ENCODE measurements at regions of chr3 and their contacts with region 1.

Region 1: DNA sequence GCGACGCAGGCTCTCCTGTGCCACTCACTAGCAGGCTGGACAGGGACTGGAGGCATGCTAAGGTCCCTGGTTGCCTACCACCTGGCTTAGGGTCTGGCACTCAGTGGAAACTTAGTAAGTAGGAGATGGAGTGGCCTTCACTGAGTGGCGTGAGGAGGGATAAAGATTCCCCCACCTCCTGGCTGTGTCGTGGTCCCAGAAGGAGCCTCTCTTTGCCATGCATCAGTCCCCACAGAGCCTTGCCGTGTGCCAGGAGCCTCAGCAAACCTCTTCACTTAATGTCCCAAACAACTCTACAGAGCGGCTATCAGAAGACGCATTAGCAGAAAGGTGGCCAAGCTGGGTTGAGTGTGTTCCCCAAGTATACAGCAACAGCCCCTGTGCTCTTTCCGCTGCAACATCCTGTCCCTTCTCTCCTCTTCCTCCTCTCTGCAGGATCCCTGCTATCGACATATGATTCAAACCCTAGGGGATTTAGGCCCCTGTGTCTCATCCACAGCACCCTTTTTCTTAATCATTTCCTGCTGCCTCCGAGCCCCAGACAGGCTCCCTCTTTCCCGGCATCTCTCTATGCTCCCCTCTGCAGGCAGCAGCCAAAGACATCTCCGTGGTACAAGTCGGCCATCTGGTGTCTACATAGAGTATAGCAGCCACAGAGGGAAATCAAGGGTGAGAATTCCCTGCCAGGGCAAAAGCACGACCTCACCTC is 66.7 kb downstream of the SLC6A1 start:
- DNase-seq: peak in 1 of 2 donors; percentile 79
- H3K4me3 ChIP-seq: no peak overlapping the region
- H3K27ac ChIP-seq: no peak overlapping the region
- H3K4me1 ChIP-seq: peaks cover 0 to 20% (median 7%) of the 10 kb centered on the region in 4 donors
- H3K27me3 ChIP-seq: peaks cover 0 to 62% (median 21%) of the 10 kb centered on the region in 3 donors
- CTCF ChIP-seq: peak in 5 of 7 experiments; percentile 34 to 59 (median 53)
- EP300 ChIP-seq: no peak
- POLR2A ChIP-seq: no peak

Region 2: GRCh38 chr3:10945683-10946287 is 113.5 kb before region 1 on chr3:
- intact Hi-C with region 1: loop called (anchors 5 kb)
- DNase-seq: peak; percentile 49 to 80
- H3K4me3 ChIP-seq: no peak overlapping the region
- H3K27ac ChIP-seq: no peak overlapping the region
- H3K4me1 ChIP-seq: no peaks in the 10 kb centered on the region
- H3K27me3 ChIP-seq: peaks cover 0 to 63% (median 0%) of the 10 kb centered on the region in 3 donors
- CTCF ChIP-seq: peak in 5 of 7 experiments; percentile 16 to 83 (median 71)
- EP300 ChIP-seq: no peak
- POLR2A ChIP-seq: no peak

Region 3: GRCh38 chr3:11335056-11335608 is 275.9 kb after region 1 on chr3:
- intact Hi-C with region 1: loop called (anchors 10 kb)
- DNase-seq: peak in 1 of 2 donors; percentile 83
- H3K4me3 ChIP-seq: no peak overlapping the region
- H3K27ac ChIP-seq: no peak overlapping the region
- H3K4me1 ChIP-seq: no peaks in the 10 kb centered on the region
- H3K27me3 ChIP-seq: no peaks in the 10 kb centered on the region
- CTCF ChIP-seq: peak in 5 of 7 experiments; percentile 41 to 63 (median 57)
- EP300 ChIP-seq: no peak
- POLR2A ChIP-seq: no peak

Measured in stomach (tissue), 19 donors.